Body of pancreas (tissue), 4 donors: ENCODE measurements at regions of chr1 and their contacts with region 1.

Region 1: DNA sequence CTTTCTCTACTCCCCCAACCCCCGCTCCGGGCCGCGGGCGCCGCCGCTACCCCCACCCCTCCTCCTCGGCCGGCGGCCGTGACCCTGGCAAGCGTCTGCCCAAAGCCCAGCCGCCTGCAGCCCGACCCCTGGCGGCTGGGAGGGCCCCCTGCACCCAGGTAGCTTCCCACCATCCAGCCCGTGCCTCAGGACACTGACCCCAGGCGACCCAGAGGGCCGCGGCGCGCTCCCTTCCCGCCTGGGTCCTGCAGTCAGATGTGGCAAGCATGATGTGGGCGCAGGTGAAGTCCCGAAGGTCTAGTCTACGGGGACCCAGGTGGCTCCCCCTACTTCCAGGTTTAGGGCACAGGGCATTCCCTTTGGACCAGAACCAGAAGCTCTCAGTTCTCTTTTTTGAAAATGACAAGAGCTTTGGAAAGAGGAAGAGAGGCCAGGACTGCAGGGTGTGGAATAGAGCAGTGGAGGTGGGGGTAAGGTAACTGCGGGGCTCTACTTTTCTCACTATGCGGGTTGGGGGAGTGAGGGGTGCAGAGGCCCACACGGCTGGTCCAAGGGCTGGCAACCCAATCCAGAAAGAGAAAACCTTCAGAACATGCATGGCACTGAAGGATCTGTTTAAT is at the start of gene DENND4B:
- DNase-seq: peak; percentile 80 to 86 (median 84)
- ATAC-seq: peak; percentile 91
- H3K4me3 ChIP-seq: peak within 1 kb of the TSS; percentile 32 to 74
- H3K27ac ChIP-seq: peak within 1 kb of the TSS; percentile 79 to 95 (median 90)
- H3K4me1 ChIP-seq: peaks cover 26% of the 10 kb centered on the region
- H3K27me3 ChIP-seq: no peaks in the 10 kb centered on the region
- CTCF ChIP-seq: peak; percentile 89 to 99 (median 97)
- POLR2A ChIP-seq: no peak
- total RNA-seq, gene DENND4B: 33.2 to 54.7 TPM

Region 2: DNA sequence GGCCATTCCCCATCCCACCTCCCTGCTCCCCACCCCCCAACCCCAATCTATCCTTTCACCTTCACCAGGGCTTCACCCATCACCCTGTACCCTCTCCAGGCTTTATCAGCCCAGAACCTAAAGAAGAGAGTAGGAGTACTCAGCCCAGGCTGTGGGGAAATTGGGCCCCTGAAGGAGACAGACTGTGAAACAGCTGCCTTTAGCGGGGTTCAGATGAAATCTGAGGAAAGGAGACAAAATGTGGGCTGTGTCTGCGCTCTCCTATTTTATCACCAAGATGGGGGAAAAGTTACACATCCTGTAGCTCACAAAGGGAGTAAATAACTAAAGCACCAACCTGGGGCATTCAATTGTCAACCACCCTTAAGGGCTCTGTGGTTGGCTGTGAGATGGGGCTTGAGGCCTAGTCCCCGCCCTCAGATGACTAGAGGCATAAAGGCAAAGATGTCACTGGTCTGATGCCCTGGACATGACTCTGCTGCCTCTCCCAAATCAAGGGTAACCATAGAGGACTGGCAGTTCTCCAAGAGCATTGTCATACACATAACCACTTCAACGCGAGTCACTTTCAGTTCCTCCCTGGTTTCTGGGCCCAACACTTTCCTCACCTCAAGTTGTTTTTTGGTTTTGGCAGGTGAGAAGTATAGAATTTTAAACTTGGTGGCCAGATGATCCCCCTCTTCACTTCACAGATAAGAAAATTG is 141.5 kb before region 1 on chr1:
- intact Hi-C with region 1: loop called (anchors 10 kb)
- DNase-seq: peak in 3 of 4 donors; percentile 27 to 82 (median 34)
- ATAC-seq: no peak
- H3K4me3 ChIP-seq: no peak overlapping the region
- H3K27ac ChIP-seq: peak overlapping the region in 1 of 4 donors; percentile 58
- H3K4me1 ChIP-seq: no peaks in the 10 kb centered on the region
- H3K27me3 ChIP-seq: no peaks in the 10 kb centered on the region
- CTCF ChIP-seq: no peak
- POLR2A ChIP-seq: peak in 1 of 3 donors; percentile 14